Activated T-helper 1 cell treated with anti-CD3 and anti-CD28 coated beads, Interleukin-12 subunit alpha, Interleukin-12 subunit beta, Interleukin-2, Interleukin-4 antibody, amounts not matched to agents 30 ng/mL and 10 ng/mL and 1 ng/mL, durations not matched to agents 14 hours and 24 hours and 36 hours (primary cell): ENCODE measurements at regions of chr7 and their contacts with region 1.

Region 1: DNA sequence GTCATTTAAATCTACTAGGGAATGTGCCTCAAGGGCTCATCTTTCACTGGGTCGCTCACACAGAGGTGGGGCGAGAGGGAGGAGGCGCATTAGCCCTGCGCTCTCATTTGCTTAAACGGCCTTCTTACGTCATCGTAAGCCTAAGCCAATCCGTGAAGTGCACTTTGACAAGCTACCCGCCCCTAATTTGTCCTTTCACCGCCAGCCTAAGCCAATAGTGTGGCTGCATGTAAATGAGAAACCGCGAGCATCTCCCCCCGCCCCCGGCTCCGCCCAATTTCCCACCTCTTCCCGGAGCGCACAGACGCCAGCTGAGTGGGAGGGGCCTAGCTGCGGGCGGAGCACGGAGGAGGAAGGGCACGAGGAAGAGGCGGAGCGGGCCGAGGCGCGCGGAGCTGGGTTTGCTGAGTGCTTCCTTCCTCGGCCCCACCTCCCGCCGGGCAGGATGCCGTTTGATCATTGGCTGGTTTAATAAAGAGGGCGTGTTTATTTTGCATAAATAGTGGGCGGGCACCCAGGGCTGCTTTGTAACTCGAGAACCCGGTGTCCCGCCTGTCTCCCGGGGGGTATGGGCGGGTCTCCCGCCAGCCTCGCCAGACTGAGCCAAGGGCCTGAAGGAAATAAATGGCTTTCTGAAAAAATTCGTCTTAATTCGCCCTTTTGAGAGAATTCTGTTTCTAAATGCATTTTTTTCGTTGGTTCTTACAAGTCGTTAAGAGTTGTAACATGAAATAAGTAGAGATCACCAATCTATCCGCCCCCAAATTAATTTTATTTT is 289.5 kb upstream of the NFE2L3 start:
- DNase-seq: peak; percentile 97
- H3K4me3 Mint-ChIP-seq: peak overlapping the region; percentile 83
- H3K27ac Mint-ChIP-seq: peak overlapping the region; percentile 86
- H3K4me1 Mint-ChIP-seq: peaks cover 46% of the 10 kb centered on the region
- H3K27me3 Mint-ChIP-seq: peaks cover 57% of the 10 kb centered on the region

Region 2: GRCh38 chr7:24757353-24758275 is 1104.8 kb before region 1 on chr7 and contains the start of gene GSDME:
- intact Hi-C with region 1: loop called (anchors 5 kb)
- DNase-seq: peak; percentile 21
- H3K4me3 Mint-ChIP-seq: peak within 1 kb of the TSS; percentile 91
- H3K27ac Mint-ChIP-seq: peak within 1 kb of the TSS; percentile 84
- H3K4me1 Mint-ChIP-seq: peaks cover 38% of the 10 kb centered on the region
- H3K27me3 Mint-ChIP-seq: peaks cover 44% of the 10 kb centered on the region
- total RNA-seq, gene GSDME: 10.6 and 11.0 TPM in 2 replicates

Region 3: DNA sequence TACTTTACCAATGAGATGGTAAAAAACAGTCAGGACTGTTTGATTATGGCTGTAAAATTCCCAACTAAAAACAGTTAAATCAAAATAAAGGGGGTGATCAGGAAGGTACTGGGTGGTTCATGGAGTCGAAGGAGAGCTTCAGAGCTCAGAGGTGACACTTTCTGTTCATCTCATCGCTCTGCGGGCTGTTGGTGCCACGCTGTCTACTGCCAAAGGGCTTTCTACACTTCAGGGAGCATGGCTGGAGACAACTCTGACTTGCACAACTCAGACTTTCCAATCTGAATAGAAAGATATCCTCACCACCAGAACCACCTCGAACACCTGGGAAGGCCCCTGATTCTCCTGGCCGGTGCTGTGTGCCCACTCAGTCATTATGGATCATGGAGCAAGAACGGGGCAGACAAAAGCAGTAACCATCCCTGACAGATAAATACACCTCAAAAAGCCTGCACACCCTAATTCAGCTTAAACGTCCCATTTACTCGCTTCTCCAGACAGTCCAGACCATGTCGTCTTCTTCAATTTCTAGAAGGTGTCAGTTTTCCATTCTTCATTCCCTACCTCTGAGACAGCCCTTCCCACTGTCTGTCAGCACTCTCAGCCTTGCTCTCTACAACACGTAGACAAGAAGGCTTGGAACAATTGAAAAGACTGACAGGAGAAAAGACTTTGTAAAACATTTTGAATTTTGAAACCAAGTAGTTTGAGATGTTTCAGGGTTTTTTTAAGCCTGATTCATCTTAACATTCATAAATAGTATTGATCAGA is 59.1 kb before region 1 on chr7:
- intact Hi-C with region 1: loop called (anchors 2 kb)
- DNase-seq: no peak
- H3K4me3 Mint-ChIP-seq: no peak overlapping the region
- H3K27ac Mint-ChIP-seq: no peak overlapping the region
- H3K4me1 Mint-ChIP-seq: no peaks in the 10 kb centered on the region
- H3K27me3 Mint-ChIP-seq: peaks cover 6% of the 10 kb centered on the region

Region 4: DNA sequence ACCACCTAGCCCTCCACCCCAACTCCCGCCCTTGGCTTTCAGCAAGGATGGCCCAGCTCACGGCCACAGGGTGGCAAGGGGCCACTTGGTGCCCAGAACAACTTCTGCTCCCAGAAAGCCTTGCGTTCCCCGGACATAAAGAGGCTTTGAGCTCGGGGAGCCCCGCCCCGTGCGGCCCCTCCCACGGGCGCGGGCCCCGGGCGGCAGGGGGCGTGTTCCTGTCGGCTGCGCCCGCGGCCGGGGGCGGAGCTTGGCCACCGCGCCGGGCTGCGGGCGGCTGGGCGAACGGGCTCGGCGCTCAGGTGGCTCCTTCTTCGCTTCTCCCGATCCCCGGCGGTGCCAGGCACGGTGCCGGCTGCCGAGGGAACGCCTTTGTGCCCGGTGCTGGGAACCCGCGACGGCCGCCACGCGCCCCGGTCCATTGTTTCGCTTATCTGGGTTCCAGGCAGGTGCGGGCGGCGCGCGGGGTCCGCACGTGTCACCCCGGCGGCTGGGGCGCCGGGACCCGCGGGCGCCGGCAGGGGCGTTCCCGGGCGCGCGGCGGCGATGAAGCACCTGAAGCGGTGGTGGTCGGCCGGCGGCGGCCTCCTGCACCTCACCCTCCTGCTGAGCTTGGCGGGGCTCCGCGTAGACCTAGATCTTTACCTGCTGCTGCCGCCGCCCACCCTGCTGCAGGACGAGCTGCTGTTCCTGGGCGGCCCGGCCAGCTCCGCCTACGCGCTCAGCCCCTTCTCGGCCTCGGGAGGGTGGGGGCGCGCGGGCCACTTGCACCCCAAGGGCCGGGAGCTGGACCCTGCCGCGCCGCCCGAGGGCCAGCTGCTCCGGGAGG is 289.7 kb after region 1 on chr7 and contains the start of gene NFE2L3:
- intact Hi-C with region 1: loop called (anchors 1 kb)
- DNase-seq: peak; percentile 83
- H3K4me3 Mint-ChIP-seq: peak within 1 kb of the TSS; percentile 97
- H3K27ac Mint-ChIP-seq: peak within 1 kb of the TSS; percentile 97
- H3K4me1 Mint-ChIP-seq: peaks cover 60% of the 10 kb centered on the region
- H3K27me3 Mint-ChIP-seq: peaks cover 2% of the 10 kb centered on the region
- total RNA-seq, gene NFE2L3: 80.1 TPM in 2 replicates

Region 5: GRCh38 chr7:26376175-26376917 is 513.9 kb after region 1 on chr7:
- intact Hi-C with region 1: loop called (anchors 10 kb)
- DNase-seq: peak; percentile 20
- H3K4me3 Mint-ChIP-seq: peak overlapping the region; percentile 79
- H3K27ac Mint-ChIP-seq: peak overlapping the region; percentile 79
- H3K4me1 Mint-ChIP-seq: peaks cover 7% of the 10 kb centered on the region
- H3K27me3 Mint-ChIP-seq: peaks cover 30% of the 10 kb centered on the region

Region 6: GRCh38 chr7:27160546-27161213 is 1298.2 kb after region 1 on chr7:
- intact Hi-C with region 1: loop called (anchors 2 kb)
- DNase-seq: peak; percentile 63
- H3K4me3 Mint-ChIP-seq: peak overlapping the region; percentile 37
- H3K27ac Mint-ChIP-seq: no peak overlapping the region
- H3K4me1 Mint-ChIP-seq: peaks cover 11% of the 10 kb centered on the region
- H3K27me3 Mint-ChIP-seq: peaks cover 77% of the 10 kb centered on the region